ENCODE measurements at regions of chr22 and their contacts with region 1.

Region 1: GRCh38 chr22:19291580-19292457 is at the start of gene CLTCL1:
- DNase-seq: peak; percentile 75
- ATAC-seq: peak; percentile 78
- H3K4me3 Mint-ChIP-seq: peak within 1 kb of the TSS; percentile 91
- H3K27ac Mint-ChIP-seq: peak within 1 kb of the TSS; percentile 83
- H3K4me1 Mint-ChIP-seq: peaks cover 18% of the 10 kb centered on the region
- H3K27me3 Mint-ChIP-seq: peaks cover 12% of the 10 kb centered on the region
- CTCF ChIP-seq: no peak
- total RNA-seq, gene CLTCL1: 2.7 and 5.0 TPM in 2 replicates

Region 2: GRCh38 chr22:19218541-19219233 is 73.1 kb before region 1 on chr22:
- CTCF ChIA-PET with region 1: no interaction called
- POLR2A ChIA-PET with region 1: interaction called, 12 read pairs
- intact Hi-C with region 1: no loop called
- DNase-seq: no peak
- ATAC-seq: no peak
- H3K4me3 Mint-ChIP-seq: no peak overlapping the region
- H3K27ac Mint-ChIP-seq: no peak overlapping the region
- H3K4me1 Mint-ChIP-seq: peaks cover 4% of the 10 kb centered on the region
- H3K27me3 Mint-ChIP-seq: peaks cover 2% of the 10 kb centered on the region
- CTCF ChIP-seq: no peak

Region 3: DNA sequence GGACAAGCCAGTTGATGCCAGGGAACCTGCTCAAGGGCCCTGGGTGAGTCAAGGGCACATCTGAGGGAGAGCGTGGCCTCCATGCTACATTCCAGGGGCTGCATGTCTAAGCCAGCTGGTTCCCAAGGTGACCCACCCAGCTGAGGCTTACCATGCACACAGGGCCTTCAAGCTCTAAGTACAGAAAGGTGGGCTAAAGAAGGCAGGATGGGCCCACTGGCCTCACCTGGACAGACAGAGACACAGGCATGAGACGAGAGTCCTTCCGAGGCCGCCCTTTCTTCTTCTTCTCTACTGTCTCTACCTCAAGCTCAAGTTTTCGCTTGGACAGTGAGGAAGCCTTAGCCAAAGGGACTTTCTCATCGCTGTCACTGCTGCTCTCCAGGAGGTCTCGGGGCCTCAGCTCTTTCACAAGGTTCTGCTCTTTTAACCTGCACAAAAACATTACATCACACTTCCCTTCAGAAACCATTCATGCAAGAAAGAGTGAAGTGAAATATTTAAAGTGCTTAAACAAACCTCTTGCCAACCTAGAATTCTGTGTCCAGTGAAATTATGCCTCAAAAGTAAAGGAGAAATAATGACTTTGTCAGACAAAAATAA is 69.8 kb after region 1 on chr22:
- CTCF ChIA-PET with region 1: interaction called, 3 read pairs
- POLR2A ChIA-PET with region 1: interaction called, 38 read pairs
- intact Hi-C with region 1: loop called (anchors 2 kb)
- DNase-seq: peak; percentile 41
- ATAC-seq: peak; percentile 90
- H3K4me3 Mint-ChIP-seq: peak overlapping the region; percentile 71
- H3K27ac Mint-ChIP-seq: peak overlapping the region; percentile 95
- H3K4me1 Mint-ChIP-seq: peaks cover 80% of the 10 kb centered on the region
- H3K27me3 Mint-ChIP-seq: no peaks in the 10 kb centered on the region
- CTCF ChIP-seq: no peak

Region 4: GRCh38 chr22:19432133-19432851 is 140.5 kb after region 1 on chr22 and contains the start of gene MRPL40:
- CTCF ChIA-PET with region 1: no interaction called
- POLR2A ChIA-PET with region 1: interaction called, 20 read pairs
- intact Hi-C with region 1: loop called (anchors 1 kb)
- DNase-seq: peak; percentile 83
- ATAC-seq: peak; percentile 87
- H3K4me3 Mint-ChIP-seq: peak within 1 kb of the TSS; percentile 90
- H3K27ac Mint-ChIP-seq: peak within 1 kb of the TSS; percentile 91
- H3K4me1 Mint-ChIP-seq: peaks cover 59% of the 10 kb centered on the region
- H3K27me3 Mint-ChIP-seq: no peaks in the 10 kb centered on the region
- CTCF ChIP-seq: no peak
- total RNA-seq, gene MRPL40: 24.0 and 24.3 TPM in 2 replicates

Region 5: GRCh38 chr22:19447388-19448075 is 155.7 kb after region 1 on chr22 and contains the start of gene C22orf39:
- CTCF ChIA-PET with region 1: no interaction called
- POLR2A ChIA-PET with region 1: interaction called, 8 read pairs
- intact Hi-C with region 1: loop called (anchors 5 kb)
- DNase-seq: peak; percentile 78
- ATAC-seq: peak; percentile 85
- H3K4me3 Mint-ChIP-seq: peak within 1 kb of the TSS; percentile 95
- H3K27ac Mint-ChIP-seq: peak within 1 kb of the TSS; percentile 98
- H3K4me1 Mint-ChIP-seq: peaks cover 31% of the 10 kb centered on the region
- H3K27me3 Mint-ChIP-seq: no peaks in the 10 kb centered on the region
- CTCF ChIP-seq: no peak
- total RNA-seq, gene C22orf39: 35.7 and 43.0 TPM in 2 replicates

Region 6: DNA sequence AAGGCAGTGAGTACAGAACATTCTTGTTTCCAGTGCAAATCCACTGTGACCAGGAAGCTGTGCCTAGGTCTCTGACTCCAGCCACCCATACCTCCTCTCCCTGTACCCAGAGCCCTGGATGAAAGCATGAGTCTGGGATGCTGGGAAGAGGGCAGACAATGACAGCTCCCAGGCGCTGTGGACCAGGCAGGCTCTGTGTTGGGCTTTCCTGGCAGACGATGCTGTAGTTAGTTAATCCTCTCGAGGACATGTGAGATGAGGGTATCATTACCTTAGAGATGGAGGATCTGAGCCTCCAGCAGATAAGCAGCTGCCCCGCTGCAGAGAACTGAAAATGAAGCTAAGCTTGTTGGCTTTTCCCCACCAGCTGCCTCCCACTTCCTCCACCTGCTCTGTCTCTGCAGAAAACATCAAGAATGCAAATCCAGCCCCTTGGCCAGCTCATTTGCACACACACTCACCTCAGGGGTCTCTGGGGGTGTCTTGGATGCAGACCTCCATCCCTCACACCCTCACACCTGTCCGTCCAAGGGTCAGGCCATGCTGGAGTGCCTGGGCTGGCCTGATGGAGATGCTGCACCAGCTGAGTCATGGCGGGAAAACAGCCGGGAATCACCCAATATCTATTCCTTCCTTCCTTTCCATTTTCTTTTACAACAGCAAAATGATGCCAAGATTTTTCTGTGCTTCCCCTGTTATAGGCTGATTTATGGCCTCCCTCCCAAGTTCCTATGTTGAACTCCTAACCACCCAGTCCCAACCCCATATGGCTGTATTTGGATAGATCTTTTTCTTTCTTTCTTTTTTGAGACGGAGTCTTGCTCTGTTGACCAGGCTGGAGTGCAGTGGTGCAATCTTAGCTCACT is 327.6 kb after region 1 on chr22:
- CTCF ChIA-PET with region 1: interaction called, 3 read pairs
- POLR2A ChIA-PET with region 1: interaction called, 4 read pairs
- intact Hi-C with region 1: loop called (anchors 5 kb)
- DNase-seq: peak; percentile 31
- ATAC-seq: peak; percentile 43
- H3K4me3 Mint-ChIP-seq: peak overlapping the region; percentile 57
- H3K27ac Mint-ChIP-seq: peak overlapping the region; percentile 13
- H3K4me1 Mint-ChIP-seq: peaks cover 59% of the 10 kb centered on the region
- H3K27me3 Mint-ChIP-seq: peaks cover 20% of the 10 kb centered on the region
- CTCF ChIP-seq: no peak

Region 7: GRCh38 chr22:20858615-20859416 is 1567.0 kb after region 1 on chr22 and contains the starts of genes PI4KA and SNAP29:
- CTCF ChIA-PET with region 1: no interaction called
- POLR2A ChIA-PET with region 1: no interaction called
- intact Hi-C with region 1: loop called (anchors 5 kb)
- DNase-seq: peak; percentile 97
- ATAC-seq: peak; percentile 93
- H3K4me3 Mint-ChIP-seq: peak within 1 kb of the TSS; percentile 89
- H3K27ac Mint-ChIP-seq: peak within 1 kb of the TSS; percentile 80
- H3K4me1 Mint-ChIP-seq: peaks cover 46% of the 10 kb centered on the region
- H3K27me3 Mint-ChIP-seq: no peaks in the 10 kb centered on the region
- CTCF ChIP-seq: no peak
- total RNA-seq, gene PI4KA: 101 and 114 TPM in 2 replicates
- total RNA-seq, gene SNAP29: 22.1 and 23.6 TPM in 2 replicates

Measured in activated B cell treated with CpG ODN at 0.5 μM for 24 hours (primary cell).